PC-3 (cell line): ENCODE measurements at regions of chr1 and their contacts with region 1.

Region 1: GRCh38 chr1:78145105-78145580 is 99.4 kb downstream of the GIPC2 start:
- DNase-seq: peak; percentile 85
- ATAC-seq: peak; percentile 74
- H3K4me3 ChIP-seq: no peak overlapping the region
- H3K27ac ChIP-seq: peak overlapping the region; percentile 61
- H3K4me1 ChIP-seq: peaks cover 35% of the 10 kb centered on the region
- H3K27me3 ChIP-seq: no peaks in the 10 kb centered on the region
- CTCF ChIP-seq: peak; percentile 97

Region 2: GRCh38 chr1:78045926-78046778 is 99.0 kb before region 1 on chr1 and contains the start of gene GIPC2:
- CTCF ChIA-PET with region 1: no interaction called
- POLR2A ChIA-PET with region 1: no interaction called
- intact Hi-C with region 1: no loop called
- DNase-seq: no peak
- ATAC-seq: no peak
- H3K4me3 ChIP-seq: no peak within 1 kb of the TSS
- H3K27ac ChIP-seq: no peak within 1 kb of the TSS
- H3K4me1 ChIP-seq: no peaks in the 10 kb centered on the region
- H3K27me3 ChIP-seq: no peaks in the 10 kb centered on the region
- CTCF ChIP-seq: no peak
- total RNA-seq, gene GIPC2: not detected in 2 replicates

Region 3: DNA sequence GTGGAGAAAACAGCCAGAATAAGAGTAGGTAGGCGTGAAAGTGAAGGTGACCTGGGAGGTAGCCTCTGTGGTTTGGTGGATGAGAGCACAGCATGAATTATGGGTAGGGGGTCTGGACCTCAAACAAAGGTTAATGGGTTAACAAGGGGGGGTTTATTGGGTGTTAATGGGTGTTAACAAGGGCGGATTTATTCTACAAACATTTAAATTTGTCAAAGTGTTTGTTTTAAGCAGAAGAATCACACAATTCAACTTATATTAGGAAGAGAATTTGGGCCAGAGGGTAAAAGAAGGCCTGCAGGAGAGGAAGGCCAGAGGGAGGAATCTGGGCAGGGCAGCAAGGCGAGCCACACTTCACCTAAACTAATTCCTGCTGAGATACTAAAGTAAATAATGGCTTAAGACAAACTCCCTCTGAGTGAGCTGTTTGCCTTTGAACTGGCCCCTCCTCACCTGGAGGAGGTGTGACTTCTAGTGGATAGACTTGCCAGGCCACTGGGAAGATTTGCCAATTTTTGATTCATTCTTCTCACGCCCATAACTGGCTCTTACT is 92.3 kb after region 1 on chr1:
- CTCF ChIA-PET with region 1: no interaction called
- POLR2A ChIA-PET with region 1: no interaction called
- intact Hi-C with region 1: loop called (anchors 1 kb)
- DNase-seq: peak; percentile 98
- ATAC-seq: peak; percentile 97
- H3K4me3 ChIP-seq: no peak overlapping the region
- H3K27ac ChIP-seq: peak overlapping the region; percentile 89
- H3K4me1 ChIP-seq: peaks cover 38% of the 10 kb centered on the region
- H3K27me3 ChIP-seq: no peaks in the 10 kb centered on the region
- CTCF ChIP-seq: no peak

Region 4: GRCh38 chr1:78286686-78287085 is 141.5 kb after region 1 on chr1:
- CTCF ChIA-PET with region 1: no interaction called
- POLR2A ChIA-PET with region 1: no interaction called
- intact Hi-C with region 1: loop called (anchors 1 kb)
- DNase-seq: peak; percentile 84
- ATAC-seq: peak; percentile 94
- H3K4me3 ChIP-seq: no peak overlapping the region
- H3K27ac ChIP-seq: peak overlapping the region; percentile 84
- H3K4me1 ChIP-seq: peaks cover 11% of the 10 kb centered on the region
- H3K27me3 ChIP-seq: no peaks in the 10 kb centered on the region
- CTCF ChIP-seq: no peak

Region 5: DNA sequence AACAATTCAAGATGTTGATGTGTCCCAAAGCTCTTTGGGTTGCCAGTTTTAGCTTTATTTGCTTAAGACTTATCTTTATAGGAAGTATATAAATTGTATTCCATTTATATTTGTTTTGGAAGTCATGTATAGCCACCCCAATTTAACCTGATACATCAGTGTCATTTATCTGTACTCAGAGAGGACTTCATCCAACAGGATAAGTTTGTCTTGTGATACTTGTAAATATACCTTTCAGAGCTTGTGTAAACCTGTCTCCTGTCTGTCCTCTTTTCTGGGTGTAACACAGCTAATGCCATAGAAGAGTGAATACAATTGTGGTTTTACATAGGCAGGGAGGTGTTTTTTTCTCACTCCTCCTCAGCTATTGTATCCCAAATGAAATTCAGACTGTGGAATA is 356.1 kb after region 1 on chr1:
- CTCF ChIA-PET with region 1: no interaction called
- POLR2A ChIA-PET with region 1: no interaction called
- intact Hi-C with region 1: loop called (anchors 2 kb)
- DNase-seq: peak; percentile 22
- ATAC-seq: peak; percentile 87
- H3K4me3 ChIP-seq: no peak overlapping the region
- H3K27ac ChIP-seq: peak overlapping the region; percentile 21; the same call in 1 of the 2 replicates
- H3K4me1 ChIP-seq: peaks cover 18% of the 10 kb centered on the region; the same call in 1 of the 2 replicates
- H3K27me3 ChIP-seq: no peaks in the 10 kb centered on the region
- CTCF ChIP-seq: no peak